ENCODE measurements at regions of chr19 and their contacts with region 1.

Region 1: GRCh38 chr19:30001791-30002190 is 59.8 kb downstream of the URI1 start:
- DNase-seq: no peak
- H3K4me3 ChIP-seq: no peak overlapping the region
- H3K27ac ChIP-seq: no peak overlapping the region
- H3K27me3 ChIP-seq: no peaks in the 10 kb centered on the region
- CTCF ChIP-seq: peak; percentile 34

Region 2: DNA sequence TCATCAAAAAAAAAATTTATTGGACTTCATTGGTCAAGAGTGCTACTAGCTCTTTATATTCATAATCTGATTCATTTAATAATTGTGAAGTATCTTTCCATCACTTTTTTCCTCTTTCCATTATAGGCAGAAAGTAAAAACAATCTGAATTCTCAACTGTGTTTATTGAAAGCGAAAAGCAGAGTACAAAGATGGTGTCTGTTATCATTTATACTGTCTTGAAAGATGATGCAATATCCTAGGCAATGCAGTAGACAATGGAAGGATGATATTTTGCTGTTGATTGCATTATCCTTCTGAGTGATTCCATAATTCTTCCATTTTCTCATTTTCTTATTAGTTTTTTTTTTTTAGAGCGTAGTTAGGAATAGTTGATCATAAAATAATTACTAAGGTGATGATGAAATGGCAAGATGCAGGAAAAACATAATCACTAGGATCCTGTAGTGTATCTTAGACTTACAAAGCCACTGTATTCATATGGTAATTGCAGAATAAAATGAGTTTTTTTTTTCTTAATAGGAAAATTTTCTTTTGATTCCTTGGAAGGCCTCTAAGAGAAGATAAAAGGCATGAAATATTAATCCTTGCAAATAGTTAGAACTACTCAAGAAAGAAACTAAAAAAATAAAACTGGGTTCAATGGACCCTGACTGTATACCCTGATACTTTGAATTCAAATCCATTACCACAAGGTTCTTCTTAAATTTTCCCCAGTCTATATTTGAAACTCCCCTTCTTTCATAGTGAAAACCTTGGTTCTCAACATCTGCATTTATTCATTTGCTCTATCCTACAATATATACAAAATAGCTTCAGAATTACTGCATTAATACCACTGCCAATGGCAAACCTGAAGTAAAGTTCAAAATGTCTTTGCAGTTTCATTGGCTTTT is 48.2 kb before region 1 on chr19:
- CTCF ChIA-PET with region 1: no interaction called
- POLR2A ChIA-PET with region 1: no interaction called
- DNase-seq: no peak
- H3K4me3 ChIP-seq: no peak overlapping the region
- H3K27ac ChIP-seq: no peak overlapping the region
- H3K27me3 ChIP-seq: no peaks in the 10 kb centered on the region
- CTCF ChIP-seq: no peak

Region 3: DNA sequence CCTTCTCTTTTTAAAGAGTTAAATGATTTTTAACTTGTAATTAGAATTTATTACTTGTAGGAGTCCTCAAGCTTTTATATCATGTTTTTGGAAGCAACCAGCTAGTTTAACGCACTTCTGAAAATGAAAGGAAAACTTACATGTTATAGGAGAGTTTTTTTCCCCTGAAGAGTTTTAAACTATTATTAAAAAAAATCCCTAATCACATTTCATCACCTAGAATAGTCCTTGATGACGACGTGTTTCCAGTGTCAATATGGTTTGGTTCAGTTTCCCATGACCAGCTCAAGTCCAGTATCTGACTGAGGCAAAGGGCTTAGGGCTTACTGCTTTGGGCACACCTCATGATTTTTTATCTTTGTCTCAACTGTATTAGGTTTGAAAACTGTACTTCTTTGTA is 23.7 kb before region 1 on chr19:
- CTCF ChIA-PET with region 1: no interaction called
- POLR2A ChIA-PET with region 1: interaction called, 10 read pairs
- DNase-seq: no peak
- H3K4me3 ChIP-seq: no peak overlapping the region
- H3K27ac ChIP-seq: no peak overlapping the region
- H3K27me3 ChIP-seq: no peaks in the 10 kb centered on the region
- CTCF ChIP-seq: no peak

Measured in AG04450 (cell line).